ENCODE measurements at regions of chr7 and their contacts with region 1.

Region 1: DNA sequence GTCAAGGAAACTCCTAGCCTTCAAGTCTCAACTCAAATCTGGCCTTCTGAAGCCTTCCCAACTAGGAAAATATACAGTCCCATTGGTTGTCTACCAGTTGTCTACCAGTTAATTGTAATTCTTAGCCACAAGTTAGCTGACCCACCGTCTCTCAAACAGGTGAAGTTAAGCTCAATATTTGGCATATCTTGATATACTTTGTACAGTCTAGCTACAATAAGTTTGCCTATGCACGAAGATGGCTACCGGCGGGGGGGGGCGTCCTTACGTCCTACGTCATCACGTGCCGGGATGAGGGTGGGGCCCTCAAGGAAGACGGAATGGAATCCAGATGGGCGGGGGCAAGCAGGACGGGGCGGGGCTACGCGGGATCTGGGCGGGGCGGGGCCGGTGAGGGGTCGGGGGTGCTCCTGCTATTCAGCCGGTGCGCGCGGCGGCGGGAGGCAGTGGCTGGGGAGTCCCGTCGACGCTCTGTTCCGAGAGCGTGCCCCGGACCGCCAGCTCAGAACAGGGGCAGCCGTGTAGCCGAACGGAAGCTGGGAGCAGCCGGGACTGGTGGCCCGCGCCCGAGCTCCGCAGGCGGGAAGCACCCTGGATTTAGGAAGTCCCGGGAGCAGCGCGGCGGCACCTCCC is at the start of gene AHR:
- DNase-seq: no peak
- ATAC-seq: peak; percentile 80
- H3K4me3 Mint-ChIP-seq: peak within 1 kb of the TSS; percentile 86
- H3K27ac Mint-ChIP-seq: peak within 1 kb of the TSS; percentile 86
- H3K4me1 Mint-ChIP-seq: peaks cover 38% of the 10 kb centered on the region
- H3K27me3 Mint-ChIP-seq: no peaks in the 10 kb centered on the region
- CTCF ChIP-seq: no peak
- total RNA-seq, gene AHR: 21.4 and 24.4 TPM in 2 replicates

Region 2: GRCh38 chr7:16420649-16421332 is 877.5 kb before region 1 on chr7:
- CTCF ChIA-PET with region 1: no interaction called
- POLR2A ChIA-PET with region 1: no interaction called
- intact Hi-C with region 1: loop called (anchors 2 kb)
- DNase-seq: peak; percentile 73
- ATAC-seq: peak; percentile 90
- H3K4me3 Mint-ChIP-seq: peak overlapping the region; percentile 93
- H3K27ac Mint-ChIP-seq: peak overlapping the region; percentile 95
- H3K4me1 Mint-ChIP-seq: peaks cover 22% of the 10 kb centered on the region
- H3K27me3 Mint-ChIP-seq: no peaks in the 10 kb centered on the region
- CTCF ChIP-seq: no peak

Region 3: DNA sequence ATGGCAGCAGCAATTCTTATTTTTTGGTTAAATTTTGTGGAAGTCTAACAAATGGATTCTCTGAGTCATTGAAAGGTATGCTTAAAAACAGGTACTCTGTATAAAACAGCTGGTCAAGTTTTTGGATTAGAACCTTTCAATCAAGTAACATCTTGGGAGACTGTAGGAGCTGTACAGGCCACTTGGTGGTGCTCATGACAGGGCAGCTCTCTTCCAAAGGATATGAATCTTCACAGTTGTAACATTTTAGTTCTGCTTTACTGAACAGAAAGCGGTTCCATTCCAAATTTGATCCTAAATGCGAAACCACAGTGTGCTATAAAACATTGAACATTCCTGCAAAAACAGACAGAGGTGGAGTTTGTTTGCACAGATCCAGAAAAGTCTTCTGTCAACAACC is 372.0 kb before region 1 on chr7:
- CTCF ChIA-PET with region 1: no interaction called
- POLR2A ChIA-PET with region 1: no interaction called
- intact Hi-C with region 1: loop called (anchors 2 kb)
- DNase-seq: no peak
- ATAC-seq: peak; percentile 45
- H3K4me3 Mint-ChIP-seq: no peak overlapping the region
- H3K27ac Mint-ChIP-seq: no peak overlapping the region
- H3K4me1 Mint-ChIP-seq: peaks cover 41% of the 10 kb centered on the region
- H3K27me3 Mint-ChIP-seq: peaks cover 11% of the 10 kb centered on the region
- CTCF ChIP-seq: no peak

Region 4: DNA sequence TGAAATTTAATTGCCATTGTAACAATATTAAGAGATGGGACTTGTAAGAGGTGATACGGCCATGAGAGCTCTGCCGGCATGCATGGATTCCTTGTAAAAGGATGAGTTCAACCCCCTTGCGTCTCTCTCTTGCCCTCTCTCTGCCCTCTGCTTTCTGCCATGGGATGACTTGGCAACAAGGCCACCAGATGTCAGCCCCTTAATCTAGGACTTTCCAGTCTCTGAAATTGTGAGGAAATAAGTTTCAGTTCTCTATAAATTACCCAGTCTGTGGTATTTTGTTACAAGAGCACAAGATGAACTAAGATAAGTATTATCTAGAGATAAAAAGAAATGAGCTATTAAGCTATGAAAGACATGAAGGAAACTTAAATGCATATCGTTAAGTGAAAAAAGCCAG is 145.6 kb before region 1 on chr7:
- CTCF ChIA-PET with region 1: interaction called, 13 read pairs
- POLR2A ChIA-PET with region 1: interaction called, 8 read pairs
- intact Hi-C with region 1: loop called (anchors 2 kb)
- DNase-seq: no peak
- ATAC-seq: peak; percentile 86
- H3K4me3 Mint-ChIP-seq: peak overlapping the region; percentile 62
- H3K27ac Mint-ChIP-seq: peak overlapping the region; percentile 63
- H3K4me1 Mint-ChIP-seq: peaks cover 40% of the 10 kb centered on the region
- H3K27me3 Mint-ChIP-seq: no peaks in the 10 kb centered on the region
- CTCF ChIP-seq: no peak

Region 5: GRCh38 chr7:17325364-17325763 is 27.0 kb after region 1 on chr7:
- CTCF ChIA-PET with region 1: no interaction called
- POLR2A ChIA-PET with region 1: no interaction called
- intact Hi-C with region 1: no loop called
- DNase-seq: no peak
- ATAC-seq: no peak
- H3K4me3 Mint-ChIP-seq: no peak overlapping the region
- H3K27ac Mint-ChIP-seq: no peak overlapping the region
- H3K4me1 Mint-ChIP-seq: no peaks in the 10 kb centered on the region
- H3K27me3 Mint-ChIP-seq: no peaks in the 10 kb centered on the region
- CTCF ChIP-seq: no peak

Region 6: DNA sequence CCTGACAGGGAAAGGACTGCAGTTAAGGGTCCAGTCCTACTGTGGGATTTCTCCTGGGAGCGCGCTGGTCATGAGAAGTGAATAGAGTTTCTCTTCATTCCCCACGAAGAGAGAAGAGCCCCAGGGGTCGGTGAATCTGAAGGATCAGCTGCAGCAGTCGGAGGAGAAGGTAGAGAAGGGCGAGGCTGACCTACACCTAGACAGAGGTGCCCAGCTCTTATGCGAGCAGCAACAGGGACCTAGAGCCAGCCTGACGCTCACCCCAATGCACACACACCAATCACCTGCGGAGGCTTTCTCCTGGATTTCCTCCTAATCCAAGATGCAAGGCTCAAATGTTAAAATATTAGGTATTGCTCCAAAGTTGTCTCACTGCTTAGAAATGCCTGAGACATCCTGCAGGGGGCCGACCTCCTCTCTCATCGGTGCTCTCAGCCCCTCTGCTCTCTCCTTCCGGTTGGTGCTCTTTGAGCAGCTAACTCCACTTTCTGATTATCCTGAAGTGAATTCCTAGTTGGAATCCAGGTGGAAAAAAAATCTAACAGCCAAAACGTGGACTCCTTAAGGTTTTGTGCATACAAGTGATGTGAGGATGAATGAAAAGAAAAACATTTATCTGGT is 176.5 kb after region 1 on chr7:
- CTCF ChIA-PET with region 1: no interaction called
- POLR2A ChIA-PET with region 1: no interaction called
- intact Hi-C with region 1: loop called (anchors 2 kb)
- DNase-seq: no peak
- ATAC-seq: no peak
- H3K4me3 Mint-ChIP-seq: no peak overlapping the region
- H3K27ac Mint-ChIP-seq: no peak overlapping the region
- H3K4me1 Mint-ChIP-seq: peaks cover 19% of the 10 kb centered on the region
- H3K27me3 Mint-ChIP-seq: no peaks in the 10 kb centered on the region
- CTCF ChIP-seq: no peak

Region 7: GRCh38 chr7:17584822-17585221 is 286.5 kb after region 1 on chr7:
- CTCF ChIA-PET with region 1: no interaction called
- POLR2A ChIA-PET with region 1: no interaction called
- intact Hi-C with region 1: no loop called
- DNase-seq: no peak
- ATAC-seq: no peak
- H3K4me3 Mint-ChIP-seq: no peak overlapping the region
- H3K27ac Mint-ChIP-seq: no peak overlapping the region
- H3K4me1 Mint-ChIP-seq: no peaks in the 10 kb centered on the region
- H3K27me3 Mint-ChIP-seq: no peaks in the 10 kb centered on the region
- CTCF ChIP-seq: no peak

Region 8: DNA sequence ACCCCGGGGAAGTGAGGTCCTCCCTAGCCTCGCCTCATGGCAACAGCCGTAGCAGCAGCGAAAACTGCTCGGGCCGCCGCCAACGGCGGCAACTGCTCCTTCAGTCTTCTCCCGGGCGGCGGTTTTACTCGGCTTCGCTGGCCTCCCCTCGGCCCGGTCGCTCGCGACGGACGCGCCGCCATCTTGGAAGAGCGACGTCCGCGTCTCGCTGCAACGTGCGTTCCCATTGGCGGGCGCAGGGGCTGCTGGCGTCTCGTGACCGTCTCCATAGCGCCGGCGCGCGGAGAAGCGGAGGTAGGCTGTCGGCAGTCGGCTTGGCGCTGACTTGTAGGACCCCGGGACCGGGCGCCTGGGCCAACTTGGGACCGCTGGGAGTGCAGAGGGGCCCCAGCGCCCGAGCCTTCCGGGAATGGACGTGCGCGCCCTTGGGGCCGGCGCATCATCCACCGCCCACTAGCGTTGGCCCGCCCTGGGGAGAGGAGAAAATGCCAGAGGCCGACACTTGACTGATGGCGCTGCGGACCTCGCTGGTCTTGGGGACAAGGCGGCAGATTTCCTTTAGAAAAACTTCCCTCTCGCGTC is 642.1 kb after region 1 on chr7 and contains the start of gene SNX13:
- CTCF ChIA-PET with region 1: no interaction called
- POLR2A ChIA-PET with region 1: no interaction called
- intact Hi-C with region 1: loop called (anchors 1 kb)
- DNase-seq: peak; percentile 84
- ATAC-seq: peak; percentile 91
- H3K4me3 Mint-ChIP-seq: peak within 1 kb of the TSS; percentile 98
- H3K27ac Mint-ChIP-seq: peak within 1 kb of the TSS; percentile 98
- H3K4me1 Mint-ChIP-seq: peaks cover 44% of the 10 kb centered on the region
- H3K27me3 Mint-ChIP-seq: no peaks in the 10 kb centered on the region
- CTCF ChIP-seq: no peak
- total RNA-seq, gene SNX13: 40.0 and 46.5 TPM in 2 replicates